Activated CD4-positive, alpha-beta T cell treated with anti-CD3 and anti-CD28 coated beads, Interleukin-2, amount 10 ng/mL, durations not matched to agents 24 days and 14 days (primary cell): ENCODE measurements at regions of chr17 and their contacts with region 1.

Region 1: GRCh38 chr17:50944054-50944901 is 78.1 kb upstream of the TOB1 start:
- DNase-seq: peak; percentile 94
- H3K4me3 Mint-ChIP-seq: peak overlapping the region; percentile 80
- H3K27ac Mint-ChIP-seq: peak overlapping the region; percentile 86
- H3K4me1 Mint-ChIP-seq: peaks cover 24% of the 10 kb centered on the region
- H3K27me3 Mint-ChIP-seq: no peaks in the 10 kb centered on the region

Region 2: DNA sequence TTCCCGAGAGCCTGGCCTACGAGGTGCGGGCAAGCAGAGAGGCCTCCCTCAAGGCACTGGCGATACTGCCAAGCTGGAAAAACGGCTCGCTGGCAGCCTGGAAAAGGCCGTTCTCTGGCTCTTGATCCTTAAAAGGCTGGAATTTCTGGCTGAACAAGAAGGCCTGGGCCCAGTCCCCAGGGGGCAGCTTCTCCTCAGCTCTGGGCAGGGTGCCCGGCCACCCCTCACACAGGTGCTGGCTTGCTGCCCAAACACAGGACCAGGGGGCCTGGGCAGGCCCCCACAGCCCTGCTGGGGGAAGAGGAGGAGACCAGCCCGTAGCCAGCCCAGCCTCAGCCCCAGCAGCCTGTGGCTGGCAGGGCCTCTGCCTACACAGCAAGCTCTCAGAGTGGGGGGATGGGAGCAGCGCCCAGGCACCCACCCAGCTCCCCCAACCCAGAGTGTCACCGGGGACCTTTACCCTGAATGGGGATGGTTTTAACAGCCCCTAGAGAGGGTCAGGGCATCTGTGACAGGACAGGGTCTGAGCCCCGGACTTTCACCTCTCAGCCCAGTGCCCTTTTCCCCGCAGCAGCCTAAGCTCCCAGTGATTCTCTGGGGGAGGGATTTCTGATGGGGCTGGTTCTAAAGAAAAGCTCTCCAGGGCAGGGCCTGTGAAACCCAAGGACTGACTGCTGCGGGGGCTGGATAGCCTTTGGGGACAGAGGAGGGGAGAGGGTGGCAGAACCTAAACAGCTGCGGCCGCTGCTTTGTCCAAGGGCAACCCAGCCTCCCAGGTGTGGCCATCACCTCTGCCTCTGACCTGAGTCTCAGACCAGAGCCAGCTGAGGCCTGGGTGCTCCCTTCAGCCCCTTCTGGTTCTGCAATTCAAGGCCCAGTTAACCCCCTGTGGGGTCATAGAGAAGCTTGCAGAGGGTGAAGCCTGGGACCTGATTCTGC is 39.5 kb before region 1 on chr17:
- intact Hi-C with region 1: loop called (anchors 5 kb)
- DNase-seq: no peak
- H3K4me3 Mint-ChIP-seq: no peak overlapping the region
- H3K27ac Mint-ChIP-seq: no peak overlapping the region
- H3K4me1 Mint-ChIP-seq: peaks cover 39% of the 10 kb centered on the region
- H3K27me3 Mint-ChIP-seq: no peaks in the 10 kb centered on the region

Region 3: DNA sequence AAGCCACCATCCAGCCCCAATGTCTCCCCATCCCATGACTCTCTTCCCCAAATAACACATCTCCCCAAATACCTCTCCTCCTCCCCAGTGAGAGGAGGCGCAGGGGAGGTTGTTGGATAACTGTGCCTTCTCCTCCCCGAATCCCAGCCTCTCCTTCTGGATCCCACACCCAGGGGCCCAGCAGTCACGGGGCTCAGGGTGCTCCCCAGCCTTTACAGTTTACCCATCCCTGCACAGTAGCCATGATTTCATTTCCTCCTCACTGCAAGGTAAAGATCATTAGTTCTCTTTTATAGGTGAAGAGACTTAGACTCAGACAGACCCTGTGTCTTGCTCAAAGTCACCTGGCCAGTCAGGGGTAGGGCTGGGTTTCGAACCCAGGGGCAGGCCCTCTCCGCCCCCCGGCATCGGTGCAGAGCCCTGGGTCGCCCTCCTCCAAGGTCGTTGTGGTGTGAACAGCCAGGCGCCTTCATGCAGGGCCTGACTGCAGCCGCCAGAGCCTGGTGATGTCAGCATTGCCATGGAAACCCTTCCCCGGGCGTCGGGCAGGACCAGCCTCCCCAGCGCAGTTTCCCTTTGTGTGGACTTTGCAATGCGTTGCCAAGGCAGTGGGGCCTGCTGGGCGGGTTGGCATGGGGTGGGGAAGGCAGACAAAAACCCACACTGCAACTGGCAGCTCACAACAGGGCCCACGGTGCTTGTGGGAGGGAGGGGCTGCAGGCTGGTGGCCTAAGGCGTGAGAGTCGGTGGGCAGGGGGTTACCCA is 24.8 kb before region 1 on chr17:
- intact Hi-C with region 1: loop called (anchors 2 kb)
- DNase-seq: peak; percentile 95
- H3K4me3 Mint-ChIP-seq: peak overlapping the region; percentile 77
- H3K27ac Mint-ChIP-seq: peak overlapping the region; percentile 93
- H3K4me1 Mint-ChIP-seq: peaks cover 34% of the 10 kb centered on the region
- H3K27me3 Mint-ChIP-seq: peaks cover under 1% of the 10 kb centered on the region

Region 4: DNA sequence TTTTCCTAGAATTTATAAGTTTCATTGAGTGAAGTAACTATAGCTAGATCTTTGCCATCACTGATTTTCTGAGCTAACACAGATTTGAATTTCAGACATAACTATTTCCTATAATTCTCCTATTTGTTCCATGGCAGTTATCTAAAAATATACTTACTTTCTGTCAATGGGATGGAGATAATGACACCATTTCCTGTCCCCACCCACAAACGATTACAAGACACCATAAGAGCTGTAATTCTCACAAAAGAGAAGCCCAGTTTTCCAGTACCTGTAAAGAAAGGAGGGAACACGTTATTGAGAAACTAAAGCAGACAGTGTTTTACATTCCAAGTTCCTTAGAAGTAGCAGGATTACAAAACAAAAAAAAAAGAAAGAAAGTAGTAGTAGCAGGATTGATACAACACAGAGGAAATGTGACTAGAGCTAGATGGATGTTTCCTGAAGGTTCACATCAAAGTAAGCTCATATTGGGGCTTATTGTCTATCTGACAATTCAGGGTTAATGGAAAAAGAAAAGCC is 32.7 kb after region 1 on chr17:
- intact Hi-C with region 1: no loop called
- DNase-seq: no peak
- H3K4me3 Mint-ChIP-seq: peak overlapping the region; percentile 38
- H3K27ac Mint-ChIP-seq: peak overlapping the region; percentile 93
- H3K4me1 Mint-ChIP-seq: peaks cover 14% of the 10 kb centered on the region
- H3K27me3 Mint-ChIP-seq: no peaks in the 10 kb centered on the region

Region 5: GRCh38 chr17:51006601-51007000 is 62.3 kb after region 1 on chr17:
- intact Hi-C with region 1: no loop called
- DNase-seq: no peak
- H3K4me3 Mint-ChIP-seq: no peak overlapping the region
- H3K27ac Mint-ChIP-seq: peak overlapping the region; percentile 2
- H3K4me1 Mint-ChIP-seq: no peaks in the 10 kb centered on the region
- H3K27me3 Mint-ChIP-seq: no peaks in the 10 kb centered on the region